H1 (cell line): ENCODE measurements at regions of chr6 and their contacts with region 1.

Region 1: DNA sequence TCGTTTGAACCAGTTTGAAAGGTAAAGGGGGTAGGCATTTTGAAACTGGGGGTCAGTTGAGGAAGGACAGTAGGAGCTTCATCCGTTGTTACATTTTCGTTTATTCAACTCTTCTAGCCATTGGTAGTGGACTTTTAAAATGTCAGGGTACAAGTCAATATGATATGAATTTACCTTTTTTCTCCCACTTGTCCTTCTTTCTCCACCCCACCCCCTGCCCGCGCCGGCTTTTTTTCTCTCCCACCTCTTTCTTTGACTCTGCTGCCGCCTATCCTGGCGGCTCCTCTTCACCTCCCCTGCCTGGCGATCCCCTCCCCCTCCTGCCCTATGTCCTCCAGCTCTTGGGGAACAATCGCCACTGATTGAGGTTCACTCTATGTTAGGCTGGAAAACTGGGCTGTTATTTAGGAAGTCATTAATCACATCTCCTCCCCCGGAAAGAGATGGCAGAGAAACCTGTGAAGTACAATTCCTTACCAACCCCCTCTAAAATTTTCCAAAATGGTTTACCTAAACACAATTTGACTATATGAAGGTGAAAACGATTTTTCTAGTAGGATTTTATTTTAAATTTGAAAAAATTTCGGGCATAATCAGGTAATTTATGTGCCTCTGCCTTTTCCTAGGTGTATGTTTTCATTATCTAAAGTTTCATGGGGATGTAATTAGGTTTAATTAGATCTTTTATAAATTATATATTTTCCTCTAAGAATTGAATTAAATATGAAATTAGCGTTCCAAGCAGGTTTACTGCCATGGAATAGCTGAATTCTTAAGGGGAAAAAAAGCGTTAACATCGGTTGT is 778 bp upstream of the LIN28B start:
- DNase-seq: peak; percentile 72 to 79
- H3K4me3 ChIP-seq: peak overlapping the region; percentile 35 to 90 (median 38); a peak in 7 of 8 replicates
- H3K27ac ChIP-seq: peak overlapping the region; percentile 98
- H3K4me1 ChIP-seq: peaks cover 2 to 7% (median 5%) of the 10 kb centered on the region in 4 experiments; a peak in 4 of 7 replicates
- H3K27me3 ChIP-seq: no peaks in the 10 kb centered on the region
- CTCF ChIP-seq: no peak
- EP300 ChIP-seq: peak in 1 of 2 experiments; percentile 86; a peak in 1 of 3 replicates
- POLR2A ChIP-seq: peak; percentile 80 to 81
- RAD21 ChIP-seq: peak; percentile 39 to 44

Region 2: GRCh38 chr6:104859225-104860146 is 96.6 kb before region 1 on chr6 and contains the start of gene HACE1:
- CTCF ChIA-PET with region 1: interaction called, 4 read pairs
- POLR2A ChIA-PET with region 1: interaction called, 10 read pairs
- DNase-seq: peak; percentile 74 to 95
- H3K4me3 ChIP-seq: peak within 1 kb of the TSS; percentile 84 to 98 (median 88)
- H3K27ac ChIP-seq: no peak within 1 kb of the TSS
- H3K4me1 ChIP-seq: no peaks in the 10 kb centered on the region; a peak in 1 of 7 replicates
- H3K27me3 ChIP-seq: no peaks in the 10 kb centered on the region
- CTCF ChIP-seq: peak; percentile 12 to 32 (median 18); a peak in 3 of 4 replicates
- EP300 ChIP-seq: no peak
- POLR2A ChIP-seq: peak in 1 of 2 experiments; percentile 75; a peak in 2 of 3 replicates
- RAD21 ChIP-seq: peak; percentile 1 to 30; a peak in 1 of 4 replicates
- total RNA-seq, gene HACE1: 21.3 and 21.6 TPM in 2 replicates

Region 3: GRCh38 chr6:104969785-104970581 is 13.9 kb after region 1 on chr6:
- CTCF ChIA-PET with region 1: interaction called, 8 read pairs
- POLR2A ChIA-PET with region 1: interaction called, 235 read pairs
- DNase-seq: no peak
- H3K4me3 ChIP-seq: peak overlapping the region in 1 of 4 experiments; percentile 21; a peak in 1 of 8 replicates
- H3K27ac ChIP-seq: no peak overlapping the region
- H3K4me1 ChIP-seq: peaks cover 0 to 11% (median 5%) of the 10 kb centered on the region in 4 experiments; a peak in 5 of 7 replicates
- H3K27me3 ChIP-seq: no peaks in the 10 kb centered on the region
- CTCF ChIP-seq: no peak
- EP300 ChIP-seq: no peak
- POLR2A ChIP-seq: no peak
- RAD21 ChIP-seq: no peak

Region 4: DNA sequence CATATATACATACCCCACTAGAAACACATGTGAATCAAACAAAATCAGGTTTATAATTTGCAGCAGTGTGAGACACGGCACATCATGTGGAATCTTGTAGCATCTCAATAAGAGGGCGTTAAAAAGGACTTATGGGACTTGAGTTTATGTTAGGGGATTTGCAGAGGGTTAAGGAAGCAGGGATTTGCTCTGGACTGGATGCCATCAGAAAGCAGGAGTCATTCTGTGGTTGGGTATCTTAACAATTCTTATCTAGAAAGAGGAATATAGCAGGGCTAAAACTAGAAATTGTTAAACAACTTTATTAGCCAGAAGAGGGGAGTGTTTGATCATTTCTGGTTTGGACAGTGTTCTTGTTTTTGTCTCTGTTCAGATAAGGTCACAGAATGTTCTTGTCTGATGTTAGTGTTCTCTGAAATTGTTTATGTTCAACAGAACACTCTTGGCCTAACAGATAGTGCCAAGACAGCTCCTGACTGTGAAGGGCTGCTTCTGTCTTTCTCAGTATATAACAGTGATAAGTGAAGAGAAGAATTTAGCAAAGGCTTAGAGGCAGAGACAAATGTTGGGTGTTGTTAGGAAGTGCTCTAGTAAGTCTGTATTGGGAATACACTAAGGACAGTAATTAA is 40.0 kb after region 1 on chr6:
- CTCF ChIA-PET with region 1: no interaction called
- POLR2A ChIA-PET with region 1: interaction called, 41 read pairs
- DNase-seq: no peak
- H3K4me3 ChIP-seq: no peak overlapping the region
- H3K27ac ChIP-seq: no peak overlapping the region
- H3K4me1 ChIP-seq: no peaks in the 10 kb centered on the region; a peak in 1 of 7 replicates
- H3K27me3 ChIP-seq: no peaks in the 10 kb centered on the region
- CTCF ChIP-seq: no peak
- EP300 ChIP-seq: no peak
- POLR2A ChIP-seq: no peak
- RAD21 ChIP-seq: no peak

Region 5: GRCh38 chr6:105024803-105025202 is 68.7 kb after region 1 on chr6:
- CTCF ChIA-PET with region 1: no interaction called
- POLR2A ChIA-PET with region 1: interaction called, 19 read pairs
- DNase-seq: no peak
- H3K4me3 ChIP-seq: peak overlapping the region in 1 of 4 experiments; percentile 45; a peak in 2 of 8 replicates
- H3K27ac ChIP-seq: peak overlapping the region; percentile 6; the same call in 1 of the 2 replicates
- H3K4me1 ChIP-seq: peaks cover 0 to 19% (median 2%) of the 10 kb centered on the region in 4 experiments; a peak in 2 of 7 replicates
- H3K27me3 ChIP-seq: no peaks in the 10 kb centered on the region
- CTCF ChIP-seq: no peak
- EP300 ChIP-seq: no peak
- POLR2A ChIP-seq: no peak
- RAD21 ChIP-seq: no peak

Region 6: GRCh38 chr6:105058846-105059245 is 102.7 kb after region 1 on chr6:
- CTCF ChIA-PET with region 1: no interaction called
- POLR2A ChIA-PET with region 1: interaction called, 10 read pairs
- DNase-seq: no peak
- H3K4me3 ChIP-seq: no peak overlapping the region
- H3K27ac ChIP-seq: no peak overlapping the region
- H3K4me1 ChIP-seq: peaks cover 0 to 5% (median 3%) of the 10 kb centered on the region in 4 experiments; a peak in 3 of 7 replicates
- H3K27me3 ChIP-seq: no peaks in the 10 kb centered on the region
- CTCF ChIP-seq: no peak
- EP300 ChIP-seq: no peak
- POLR2A ChIP-seq: no peak
- RAD21 ChIP-seq: no peak